ENCODE measurements at regions of chr7 and their contacts with region 1.

Region 1: GRCh38 chr7:141014524-141015395 is at the start of gene MRPS33:
- DNase-seq: peak; percentile 95 to 99 (median 97)

Region 2: GRCh38 chr7:140479062-140479738 is 535.6 kb before region 1 on chr7 and contains the start of gene MKRN1:
- intact Hi-C with region 1: loop called (anchors 10 kb)
- DNase-seq: peak; percentile 91 to 99 (median 96)

Region 3: GRCh38 chr7:140810830-140811556 is 203.8 kb before region 1 on chr7:
- intact Hi-C with region 1: loop called (anchors 1 kb)
- DNase-seq: peak in 4 of 10 donors; percentile 27 to 64 (median 58)

Region 4: DNA sequence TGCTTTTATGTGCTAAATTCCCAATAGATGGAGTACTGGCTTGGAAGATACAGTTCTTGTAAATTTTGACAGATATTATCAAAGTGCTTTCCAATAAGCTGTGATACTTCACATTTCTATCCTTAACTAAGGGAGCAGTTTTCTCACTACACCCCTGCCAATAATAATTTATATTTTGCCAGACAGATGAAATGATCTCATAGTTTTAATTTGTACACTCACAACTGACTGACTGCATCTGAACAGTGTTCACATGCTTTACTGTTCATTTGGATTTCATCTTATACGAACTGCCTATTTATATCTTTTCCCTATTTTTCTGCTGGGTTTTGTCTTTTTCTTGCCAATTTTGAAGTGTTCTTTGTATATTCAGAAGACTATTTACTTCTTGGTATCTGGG is 186.0 kb before region 1 on chr7:
- intact Hi-C with region 1: no loop called
- DNase-seq: no peak

Region 5: DNA sequence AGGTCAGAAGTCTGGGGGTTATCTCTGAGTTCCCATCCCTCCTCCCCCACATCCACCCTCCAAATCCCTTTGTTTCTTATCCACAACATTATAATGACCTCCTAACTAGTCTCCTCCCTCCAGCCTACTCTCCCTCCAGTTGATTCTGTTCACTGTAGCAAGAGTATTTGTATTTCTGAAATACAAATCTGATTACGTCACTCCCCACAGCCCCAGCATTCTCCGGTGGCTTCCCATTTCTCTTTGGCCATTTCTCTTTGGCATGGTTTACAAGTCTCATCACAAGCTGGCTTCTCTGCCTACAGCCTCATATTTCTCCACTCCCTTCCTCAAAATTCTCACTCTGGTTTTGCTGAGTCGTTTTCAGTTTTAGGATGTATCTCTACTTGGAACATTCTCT is 24.6 kb after region 1 on chr7:
- intact Hi-C with region 1: no loop called
- DNase-seq: no peak

Region 6: GRCh38 chr7:141053626-141054025 is 38.9 kb after region 1 on chr7:
- intact Hi-C with region 1: no loop called
- DNase-seq: no peak

Region 7: GRCh38 chr7:141072548-141073172 is 57.9 kb after region 1 on chr7:
- intact Hi-C with region 1: loop called (anchors 5 kb)
- DNase-seq: peak; percentile 65 to 97 (median 84)

Region 8: DNA sequence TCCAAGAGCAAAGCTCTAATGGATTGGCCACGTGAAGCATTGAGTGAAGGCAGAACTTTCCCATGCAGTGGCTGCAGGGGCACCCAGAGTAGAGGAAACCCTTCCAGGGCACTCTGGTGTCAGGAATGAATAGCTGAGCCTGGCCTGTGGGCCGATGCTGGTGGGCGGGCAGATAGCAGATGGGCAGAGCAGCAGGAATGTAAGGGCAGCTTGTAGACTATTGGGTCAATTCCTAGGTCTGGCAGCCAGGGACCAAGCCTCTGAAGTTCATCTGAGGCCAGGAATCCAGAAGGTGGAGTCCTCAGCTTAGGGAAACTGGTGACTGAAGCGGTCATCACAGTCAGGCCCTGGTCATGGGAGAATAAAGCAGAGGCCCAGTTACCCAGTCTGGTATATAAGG is 174.5 kb after region 1 on chr7:
- intact Hi-C with region 1: no loop called
- DNase-seq: no peak

Region 9: GRCh38 chr7:141654551-141654950 is 639.8 kb after region 1 on chr7:
- intact Hi-C with region 1: loop called (anchors 5 kb)
- DNase-seq: peak in 7 of 10 donors; percentile 46 to 93 (median 66)

Measured in posterior cingulate gyrus (tissue), 11 donors.